IMR-90 (cell line): ENCODE measurements at regions of chr5 and their contacts with region 1.

Region 1: DNA sequence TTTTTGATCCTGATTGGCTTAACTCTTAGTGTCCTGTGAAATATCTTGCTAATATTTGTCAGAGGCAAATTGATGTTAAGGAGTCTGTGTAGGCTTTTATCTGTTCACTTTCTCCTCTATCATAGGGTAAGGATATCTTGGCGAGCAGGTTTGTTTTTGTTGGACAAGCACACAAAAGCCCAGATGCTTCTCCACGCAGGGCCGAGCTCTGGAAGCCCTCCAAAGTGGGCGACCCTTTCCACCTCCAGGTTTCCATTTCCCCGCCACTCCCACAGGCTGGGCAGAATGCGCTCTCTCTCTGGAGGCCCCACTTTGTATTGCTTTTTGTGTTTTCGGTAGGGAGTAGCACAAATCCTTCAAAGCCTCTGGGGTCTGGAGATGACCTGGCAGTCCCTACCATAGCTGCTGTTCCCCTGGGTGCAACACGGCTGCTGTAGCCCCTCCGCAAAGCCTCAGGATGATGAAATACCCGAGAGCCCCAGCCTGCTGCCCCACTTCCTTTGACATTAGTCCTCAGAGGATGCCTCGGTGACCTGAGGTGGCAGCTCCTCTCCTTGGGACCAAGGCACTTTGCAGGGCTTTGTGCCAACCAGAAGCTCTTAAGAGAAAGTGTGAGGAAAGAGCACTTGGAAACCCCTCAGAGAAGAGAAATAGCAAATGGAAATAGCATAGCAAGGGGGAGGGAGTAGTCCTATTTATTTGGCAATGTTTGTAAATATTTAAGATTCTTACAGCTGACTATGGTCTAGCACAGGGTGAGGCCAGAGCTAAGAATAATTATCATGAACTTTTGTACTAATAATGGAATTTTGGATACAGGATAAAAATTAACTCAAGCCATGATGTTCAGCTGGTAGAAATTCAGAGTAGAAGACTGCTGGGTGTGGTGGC is 122.8 kb downstream of the ARHGEF28 start:
- DNase-seq: peak; percentile 53
- ATAC-seq: peak; percentile 79
- H3K4me3 ChIP-seq: no peak overlapping the region
- H3K27ac ChIP-seq: peak overlapping the region; percentile 68
- H3K4me1 ChIP-seq: peaks cover 12% of the 10 kb centered on the region
- H3K27me3 ChIP-seq: no peaks in the 10 kb centered on the region
- CTCF ChIP-seq: no peak
- POLR2A ChIP-seq: no peak
- RAD21 ChIP-seq: no peak

Region 2: GRCh38 chr5:73727470-73727869 is 21.3 kb before region 1 on chr5:
- CTCF ChIA-PET with region 1: no interaction called
- POLR2A ChIA-PET with region 1: no interaction called
- dilution Hi-C with region 1: no loop called
- in situ Hi-C with region 1: no loop called
- intact Hi-C with region 1: loop called (anchors 2 kb)
- DNase-seq: no peak
- ATAC-seq: no peak
- H3K4me3 ChIP-seq: no peak overlapping the region
- H3K27ac ChIP-seq: no peak overlapping the region
- H3K4me1 ChIP-seq: peaks cover 6% of the 10 kb centered on the region
- H3K27me3 ChIP-seq: no peaks in the 10 kb centered on the region
- CTCF ChIP-seq: no peak
- POLR2A ChIP-seq: no peak
- RAD21 ChIP-seq: no peak